GM12878 (cell line): ENCODE measurements at regions of chr4 and their contacts with region 1.

Region 1: GRCh38 chr4:112636688-112637551 is at the starts of genes LARP7 and ZGRF1:
- DNase-seq: peak; percentile 96
- ATAC-seq: peak; percentile 94
- H3K4me3 ChIP-seq: peak within 1 kb of the TSS; percentile 87
- H3K27ac ChIP-seq: peak within 1 kb of the TSS; percentile 98
- H3K4me1 ChIP-seq: peaks cover 20% of the 10 kb centered on the region
- H3K27me3 ChIP-seq: no peaks in the 10 kb centered on the region
- CTCF ChIP-seq: peak; percentile 86 to 96 (median 95)
- EP300 ChIP-seq: peak in 1 of 2 experiments; percentile 32; a peak in 2 of 4 replicates
- POLR2A ChIP-seq: peak; percentile 77
- RAD21 ChIP-seq: peak; percentile 50
- polyA plus RNA-seq, gene LARP7: 79.0 to 107 TPM
- polyA plus RNA-seq, gene ZGRF1: 8.5 to 9.0 TPM

Region 2: DNA sequence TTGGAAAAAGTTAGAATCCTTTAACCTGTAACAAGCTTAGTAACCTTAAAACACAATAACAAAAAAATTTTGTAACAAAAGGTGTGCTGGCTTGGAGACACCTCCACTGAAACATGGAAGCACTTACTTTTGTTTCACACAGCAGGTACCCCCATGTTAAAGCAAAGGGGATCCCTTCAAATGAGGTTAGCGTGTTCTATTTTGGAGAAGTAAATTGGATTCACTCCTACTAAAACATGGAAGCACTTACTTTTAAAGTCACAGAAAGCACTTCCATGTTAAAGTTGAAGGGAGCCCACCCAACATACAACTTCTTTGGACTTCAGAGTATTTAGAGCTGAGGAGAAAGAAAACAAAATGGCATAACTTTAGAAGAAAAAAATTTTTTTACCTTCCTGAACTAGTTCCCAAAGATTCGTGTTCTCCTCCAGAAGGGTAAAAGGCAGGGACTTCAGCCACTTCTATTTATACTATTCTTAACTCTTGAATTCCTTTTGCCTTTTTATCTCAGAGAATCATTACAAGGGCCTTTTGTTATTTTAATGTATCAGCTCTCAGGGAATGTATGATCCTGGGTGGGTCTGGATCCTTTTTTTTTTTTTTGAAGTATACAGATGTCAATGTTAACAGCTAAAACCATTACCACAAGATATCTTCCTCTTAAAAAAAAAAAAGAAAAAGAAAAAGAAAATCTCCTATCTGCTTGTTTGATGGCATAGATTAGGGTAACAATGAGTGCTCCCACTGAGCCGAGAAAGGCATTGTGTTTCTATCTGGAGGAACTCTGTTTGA is 11.5 kb after region 1 on chr4:
- CTCF ChIA-PET with region 1: interaction called, 16 read pairs
- POLR2A ChIA-PET with region 1: interaction called, 5 read pairs
- RAD21 ChIA-PET with region 1: interaction called, 6 read pairs
- SMC1A ChIA-PET with region 1: interaction called, 6 read pairs
- in situ Hi-C with region 1: no loop called
- intact Hi-C with region 1: no loop called
- DNase-seq: no peak
- ATAC-seq: no peak
- H3K4me3 ChIP-seq: no peak overlapping the region
- H3K27ac ChIP-seq: no peak overlapping the region
- H3K4me1 ChIP-seq: peaks cover 1% of the 10 kb centered on the region; the same call in 1 of the 2 replicates
- H3K27me3 ChIP-seq: no peaks in the 10 kb centered on the region
- CTCF ChIP-seq: no peak
- EP300 ChIP-seq: no peak
- POLR2A ChIP-seq: no peak
- RAD21 ChIP-seq: no peak

Region 3: DNA sequence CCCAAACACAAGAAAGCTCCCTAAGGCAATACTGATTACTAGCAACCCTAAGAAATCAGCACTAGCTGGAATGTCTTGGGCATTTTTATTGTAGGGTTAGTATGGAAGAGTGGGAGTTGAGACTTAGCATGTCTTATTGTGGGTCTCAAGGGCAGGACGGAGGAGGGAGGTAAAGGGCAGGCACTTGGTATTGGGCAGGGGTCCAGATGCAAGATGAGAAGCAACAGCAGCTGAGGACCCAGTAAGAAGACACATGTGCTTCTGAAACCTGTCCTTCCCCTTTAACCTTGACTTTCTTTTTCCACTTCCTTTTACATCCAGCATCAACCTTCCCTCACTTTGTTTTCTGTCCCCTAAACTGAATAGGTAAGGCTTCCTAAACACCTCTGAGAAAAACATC is 37.5 kb after region 1 on chr4:
- CTCF ChIA-PET with region 1: no interaction called
- POLR2A ChIA-PET with region 1: no interaction called
- RAD21 ChIA-PET with region 1: no interaction called
- SMC1A ChIA-PET with region 1: no interaction called
- in situ Hi-C with region 1: no loop called
- intact Hi-C with region 1: no loop called
- DNase-seq: no peak
- ATAC-seq: no peak
- H3K4me3 ChIP-seq: no peak overlapping the region
- H3K27ac ChIP-seq: no peak overlapping the region
- H3K4me1 ChIP-seq: no peaks in the 10 kb centered on the region
- H3K27me3 ChIP-seq: no peaks in the 10 kb centered on the region
- CTCF ChIP-seq: no peak
- EP300 ChIP-seq: no peak
- POLR2A ChIP-seq: no peak
- RAD21 ChIP-seq: no peak

Region 4: DNA sequence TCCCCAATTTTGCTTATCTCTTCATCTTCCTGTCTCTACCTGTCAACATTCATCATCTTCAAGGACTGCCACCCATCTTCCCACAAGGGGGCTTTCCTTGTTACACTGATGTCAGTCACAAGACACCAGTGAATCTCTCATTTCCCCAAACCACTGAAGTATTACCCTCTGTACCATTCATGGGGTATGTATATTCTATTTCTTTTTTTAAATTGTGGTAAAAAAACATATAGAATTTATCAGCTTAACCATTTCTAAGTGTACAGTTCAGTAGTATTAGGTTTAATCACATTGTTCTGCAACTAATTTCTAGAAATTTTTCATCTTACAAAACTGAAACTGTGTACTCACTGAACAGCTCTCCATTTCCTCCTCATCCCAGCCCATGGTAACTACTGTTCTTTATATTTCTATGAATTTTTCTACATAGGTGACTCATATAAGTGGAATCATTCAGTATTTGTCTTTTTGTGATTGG is 98.6 kb after region 1 on chr4:
- CTCF ChIA-PET with region 1: interaction called, 5 read pairs
- POLR2A ChIA-PET with region 1: interaction called, 3 read pairs
- RAD21 ChIA-PET with region 1: interaction called, 3 read pairs
- SMC1A ChIA-PET with region 1: interaction called, 12 read pairs
- in situ Hi-C with region 1: no loop called
- intact Hi-C with region 1: no loop called
- DNase-seq: peak; percentile 69
- ATAC-seq: peak; percentile 84
- H3K4me3 ChIP-seq: no peak overlapping the region
- H3K27ac ChIP-seq: peak overlapping the region; percentile 77; the same call in 1 of the 2 replicates
- H3K4me1 ChIP-seq: peaks cover 27% of the 10 kb centered on the region
- H3K27me3 ChIP-seq: no peaks in the 10 kb centered on the region
- CTCF ChIP-seq: no peak
- EP300 ChIP-seq: peak; percentile 82 to 92; a peak in 3 of 4 replicates
- POLR2A ChIP-seq: no peak
- RAD21 ChIP-seq: no peak

Region 5: GRCh38 chr4:112759313-112759712 is 122.4 kb after region 1 on chr4:
- CTCF ChIA-PET with region 1: interaction called, 205 read pairs
- POLR2A ChIA-PET with region 1: interaction called, 3 read pairs
- RAD21 ChIA-PET with region 1: interaction called, 14 read pairs
- SMC1A ChIA-PET with region 1: interaction called, 46 read pairs
- in situ Hi-C with region 1: loop called (anchors 5 kb)
- intact Hi-C with region 1: loop called (anchors 1 kb)
- DNase-seq: no peak
- ATAC-seq: no peak
- H3K4me3 ChIP-seq: no peak overlapping the region
- H3K27ac ChIP-seq: no peak overlapping the region
- H3K4me1 ChIP-seq: no peaks in the 10 kb centered on the region; the same call in 1 of the 2 replicates
- H3K27me3 ChIP-seq: no peaks in the 10 kb centered on the region
- CTCF ChIP-seq: no peak
- EP300 ChIP-seq: no peak
- POLR2A ChIP-seq: no peak
- RAD21 ChIP-seq: no peak